ENCODE measurements at regions of chr13 and their contacts with region 1.

Region 1: DNA sequence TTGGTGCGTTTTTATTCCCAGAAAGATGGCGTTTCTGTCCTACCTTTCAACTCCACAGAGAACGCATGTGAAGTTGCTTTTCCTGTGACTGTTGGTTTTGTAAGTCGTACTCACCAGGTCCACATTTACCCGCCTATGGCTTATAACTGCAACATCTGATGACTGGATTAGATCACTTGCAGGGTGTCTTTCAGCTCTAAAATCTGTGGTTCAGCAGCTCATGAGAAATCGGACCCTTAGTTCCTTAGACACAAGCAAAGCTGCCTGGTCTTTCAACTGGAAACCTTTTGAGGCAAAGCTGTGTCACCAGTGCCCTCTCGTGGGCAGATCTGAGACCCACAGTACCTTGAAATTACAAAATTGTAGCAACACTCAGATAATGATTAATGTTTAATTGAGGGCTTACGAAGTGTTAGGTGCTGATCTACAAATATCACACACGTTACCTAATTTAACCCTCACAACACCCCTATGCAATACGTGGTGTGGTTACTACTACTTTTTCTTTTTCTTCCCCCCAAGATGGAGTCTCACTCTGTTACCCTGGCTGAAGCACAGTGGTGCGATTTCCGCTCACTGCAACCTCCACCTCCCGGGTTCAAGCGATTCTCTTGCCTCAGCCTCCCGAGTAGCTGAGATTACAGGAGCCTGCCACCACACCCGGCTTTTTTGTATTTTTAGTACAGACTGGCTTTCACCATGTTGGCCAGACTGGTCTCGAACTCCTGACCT is 65.4 kb downstream of the RUBCNL start:
- DNase-seq: peak; percentile 61
- H3K4me3 Mint-ChIP-seq: peak overlapping the region; percentile 81
- H3K27ac Mint-ChIP-seq: peak overlapping the region; percentile 93
- H3K4me1 Mint-ChIP-seq: peaks cover 38% of the 10 kb centered on the region
- H3K27me3 Mint-ChIP-seq: peaks cover 2% of the 10 kb centered on the region

Region 2: GRCh38 chr13:45623515-45624090 is 698.1 kb before region 1 on chr13:
- intact Hi-C with region 1: loop called (anchors 2 kb)
- DNase-seq: no peak
- H3K4me3 Mint-ChIP-seq: no peak overlapping the region
- H3K27ac Mint-ChIP-seq: no peak overlapping the region
- H3K4me1 Mint-ChIP-seq: peaks cover 7% of the 10 kb centered on the region
- H3K27me3 Mint-ChIP-seq: peaks cover 33% of the 10 kb centered on the region

Region 3: GRCh38 chr13:46211483-46212351 is 109.9 kb before region 1 on chr13 and contains the start of gene LRRC63:
- intact Hi-C with region 1: loop called (anchors 5 kb)
- DNase-seq: peak; percentile 83
- H3K4me3 Mint-ChIP-seq: peak within 1 kb of the TSS; percentile 89
- H3K27ac Mint-ChIP-seq: peak within 1 kb of the TSS; percentile 92
- H3K4me1 Mint-ChIP-seq: peaks cover 37% of the 10 kb centered on the region
- H3K27me3 Mint-ChIP-seq: peaks cover 4% of the 10 kb centered on the region
- total RNA-seq, gene LRRC63: 0.52 and 0.71 TPM in 2 replicates

Region 4: DNA sequence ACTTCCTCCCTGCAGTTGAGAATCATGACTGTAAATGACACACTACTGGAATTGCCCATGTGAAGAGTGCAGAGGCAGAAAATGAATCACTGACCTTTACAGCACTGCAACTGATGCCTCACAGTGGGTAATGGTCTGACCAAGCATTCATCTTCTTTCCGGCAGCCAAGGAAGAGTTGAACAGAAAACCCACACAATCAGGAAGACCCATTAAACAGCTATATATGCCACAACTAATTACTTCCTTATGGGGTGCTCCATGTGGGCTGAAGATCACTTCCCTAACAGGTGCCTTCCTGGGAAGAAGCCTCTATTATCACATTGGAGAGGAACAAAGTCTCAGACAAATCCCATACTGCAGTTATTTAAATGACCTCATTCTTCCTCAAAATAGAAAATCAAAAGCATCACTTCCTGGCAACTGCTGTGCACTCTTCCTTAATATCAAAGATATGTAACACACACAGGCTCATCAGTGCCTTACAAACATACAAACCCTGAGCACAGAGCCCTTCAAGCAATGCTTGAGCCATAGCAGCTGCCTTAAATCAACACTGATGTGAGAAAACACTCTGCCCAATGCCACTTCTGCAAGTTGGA is 19.6 kb after region 1 on chr13:
- intact Hi-C with region 1: loop called (anchors 2 kb)
- DNase-seq: no peak
- H3K4me3 Mint-ChIP-seq: peak overlapping the region; percentile 5
- H3K27ac Mint-ChIP-seq: peak overlapping the region; percentile 81
- H3K4me1 Mint-ChIP-seq: peaks cover 45% of the 10 kb centered on the region
- H3K27me3 Mint-ChIP-seq: no peaks in the 10 kb centered on the region

Region 5: GRCh38 chr13:46354156-46355091 is 32.8 kb after region 1 on chr13:
- intact Hi-C with region 1: no loop called
- DNase-seq: peak; percentile 31
- H3K4me3 Mint-ChIP-seq: no peak overlapping the region
- H3K27ac Mint-ChIP-seq: peak overlapping the region; percentile 82
- H3K4me1 Mint-ChIP-seq: peaks cover 14% of the 10 kb centered on the region
- H3K27me3 Mint-ChIP-seq: no peaks in the 10 kb centered on the region